ENCODE measurements at regions of chr15 and their contacts with region 1.

Region 1: GRCh38 chr15:39756806-39757522 is 25.7 kb downstream of the FSIP1 start:
- DNase-seq: peak; percentile 69
- H3K4me3 ChIP-seq: no peak overlapping the region
- H3K27ac ChIP-seq: no peak overlapping the region
- H3K4me1 ChIP-seq: no peaks in the 10 kb centered on the region
- CTCF ChIP-seq: peak; percentile 90

Region 2: DNA sequence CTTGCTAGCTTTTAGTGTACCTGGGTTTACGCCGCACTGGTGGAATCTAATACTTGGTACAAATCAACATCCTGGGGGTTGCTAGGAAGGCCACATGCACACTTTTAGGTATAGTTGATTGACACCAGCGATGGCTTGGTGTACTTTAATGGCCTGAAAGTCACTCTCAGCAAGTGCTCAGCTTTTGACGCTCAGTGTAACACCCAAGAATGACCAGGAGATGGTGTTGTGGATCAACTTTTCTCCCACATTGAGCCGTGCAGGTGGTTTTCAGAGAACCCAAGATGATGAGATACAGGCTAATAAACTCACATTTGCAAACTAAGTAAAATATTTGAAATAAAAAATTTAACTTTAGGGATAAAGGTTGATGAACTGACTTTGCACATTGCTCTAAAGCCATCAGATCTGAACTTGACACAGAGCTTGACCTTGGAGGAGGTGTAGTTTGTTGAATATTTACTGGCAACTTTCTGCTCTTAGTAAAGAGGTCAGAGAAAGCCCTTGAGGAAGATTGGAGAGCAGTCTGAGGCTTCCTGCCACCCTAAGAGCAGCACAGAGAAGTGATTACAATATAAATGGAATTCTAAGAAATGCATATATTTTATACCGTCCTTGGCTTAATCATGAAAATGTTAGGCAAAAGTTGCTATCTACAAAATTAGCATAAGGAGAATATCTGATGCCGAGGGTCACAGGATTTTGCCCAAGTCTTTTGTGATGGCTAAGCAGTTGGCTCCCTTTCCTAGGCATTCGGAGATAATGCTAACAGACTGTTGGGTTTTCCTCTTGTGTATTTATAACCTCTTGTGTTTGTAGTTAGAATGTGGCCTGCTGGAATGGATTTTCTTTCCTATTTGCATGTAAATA is 1048.9 kb before region 1 on chr15:
- CTCF ChIA-PET with region 1: no interaction called
- POLR2A ChIA-PET with region 1: no interaction called
- intact Hi-C with region 1: loop called (anchors 5 kb)
- DNase-seq: peak; percentile 59
- H3K4me3 ChIP-seq: no peak overlapping the region
- H3K27ac ChIP-seq: no peak overlapping the region
- H3K4me1 ChIP-seq: no peaks in the 10 kb centered on the region
- CTCF ChIP-seq: peak; percentile 91

Region 3: DNA sequence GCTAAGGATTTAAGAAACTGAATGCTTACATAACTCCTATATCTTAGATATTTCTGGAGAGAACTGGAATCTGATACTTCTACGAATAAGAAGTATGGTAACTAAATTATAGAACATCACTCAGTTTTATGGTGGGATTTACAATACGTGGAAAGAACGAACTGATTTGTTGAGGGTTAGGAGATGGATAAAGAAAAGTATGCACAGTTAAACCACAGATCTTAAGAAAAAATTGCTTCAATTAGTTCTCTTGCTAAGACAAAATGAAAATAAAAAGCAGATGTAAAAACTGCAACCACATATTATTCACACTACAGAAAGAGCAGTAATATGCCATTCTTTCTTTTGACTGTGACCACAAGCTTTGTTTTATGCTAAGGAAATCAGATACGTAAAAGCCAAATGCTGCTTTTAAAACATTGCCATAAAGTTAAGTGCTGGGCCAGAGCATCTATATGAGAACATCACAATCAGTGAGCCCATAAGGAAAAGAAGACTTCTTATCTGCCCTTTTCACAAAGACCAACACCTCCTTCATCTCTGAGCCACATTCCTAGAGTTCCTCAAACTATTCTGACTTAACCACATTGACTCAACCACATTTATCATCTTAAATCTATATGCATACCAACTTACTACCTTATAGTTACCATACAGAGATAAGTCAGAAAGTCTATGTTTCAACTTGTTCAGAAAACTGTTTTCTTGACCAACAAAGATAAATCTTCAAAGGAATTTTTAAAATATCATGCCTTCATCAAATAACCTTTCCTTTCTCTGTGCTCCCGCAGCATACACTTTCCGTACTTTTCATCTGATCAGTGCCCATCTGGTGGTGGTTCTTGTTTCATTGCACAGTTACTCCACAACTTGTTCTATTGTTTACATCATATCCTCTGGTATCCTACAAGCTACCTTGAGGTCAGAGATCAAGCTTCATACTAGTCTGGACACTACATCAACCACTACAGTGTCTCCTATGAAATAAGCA is 36.0 kb before region 1 on chr15:
- CTCF ChIA-PET with region 1: no interaction called
- POLR2A ChIA-PET with region 1: no interaction called
- intact Hi-C with region 1: no loop called
- DNase-seq: no peak
- H3K4me3 ChIP-seq: no peak overlapping the region
- H3K27ac ChIP-seq: no peak overlapping the region
- H3K4me1 ChIP-seq: no peaks in the 10 kb centered on the region
- CTCF ChIP-seq: no peak

Region 4: DNA sequence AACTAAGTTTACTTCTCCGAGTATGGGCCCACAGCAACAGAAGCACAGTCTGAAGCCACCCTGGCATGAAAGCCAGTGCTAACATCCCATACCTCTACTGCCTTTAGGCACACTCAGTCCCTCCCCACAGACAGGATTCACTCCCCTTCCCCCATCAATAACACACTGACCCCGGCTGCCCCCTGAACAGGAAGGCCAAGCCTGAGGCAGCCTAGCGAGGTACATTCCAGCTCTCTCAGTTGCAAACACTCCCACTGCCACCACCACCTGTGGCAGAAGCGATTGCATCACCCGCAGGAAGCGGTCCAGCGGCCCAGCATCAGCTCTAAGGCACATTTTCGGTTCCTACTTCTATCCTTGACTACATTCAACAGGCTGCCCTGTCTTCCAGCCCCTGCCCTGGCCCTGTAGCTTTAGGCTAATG is 358.7 kb after region 1 on chr15:
- CTCF ChIA-PET with region 1: no interaction called
- POLR2A ChIA-PET with region 1: no interaction called
- intact Hi-C with region 1: no loop called
- DNase-seq: peak; percentile 97
- H3K4me3 ChIP-seq: peak overlapping the region; percentile 49
- H3K27ac ChIP-seq: peak overlapping the region; percentile 86
- H3K4me1 ChIP-seq: peaks cover 80% of the 10 kb centered on the region
- CTCF ChIP-seq: no peak

Measured in OCI-LY7 (cell line).